A673 (cell line): ENCODE measurements at regions of chr5 and their contacts with region 1.

Region 1: GRCh38 chr5:93006915-93007314 is 574.1 kb downstream of the NR2F1-AS1 start:
- DNase-seq: no peak
- H3K4me3 ChIP-seq: no peak overlapping the region
- H3K27ac ChIP-seq: no peak overlapping the region
- H3K4me1 ChIP-seq: no peaks in the 10 kb centered on the region
- H3K27me3 ChIP-seq: no peaks in the 10 kb centered on the region
- CTCF ChIP-seq: no peak

Region 2: GRCh38 chr5:92429646-92430045 is 577.3 kb before region 1 on chr5:
- CTCF ChIA-PET with region 1: no interaction called
- POLR2A ChIA-PET with region 1: no interaction called
- intact Hi-C with region 1: no loop called
- DNase-seq: no peak
- H3K4me3 ChIP-seq: no peak overlapping the region
- H3K27ac ChIP-seq: no peak overlapping the region
- H3K4me1 ChIP-seq: no peaks in the 10 kb centered on the region
- H3K27me3 ChIP-seq: no peaks in the 10 kb centered on the region
- CTCF ChIP-seq: no peak

Region 3: DNA sequence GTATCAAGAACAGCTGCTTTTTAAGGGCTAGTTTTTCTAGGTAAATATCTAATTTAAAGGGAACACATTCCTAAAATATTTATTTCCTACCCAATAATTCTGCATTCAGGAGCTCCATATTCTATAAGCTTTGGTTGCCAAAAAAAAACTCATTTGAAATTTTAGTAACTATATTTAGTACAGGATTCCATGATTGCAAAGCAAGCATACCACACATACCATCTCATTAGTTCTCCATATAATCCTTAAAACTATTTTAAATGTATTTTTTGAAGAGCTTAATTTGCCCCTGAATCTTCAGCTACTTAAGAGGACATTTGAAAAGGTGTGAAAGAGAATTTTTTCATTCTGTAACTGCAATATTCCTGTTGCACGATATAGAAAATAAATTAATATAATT is 302.9 kb before region 1 on chr5:
- CTCF ChIA-PET with region 1: no interaction called
- POLR2A ChIA-PET with region 1: interaction called, 11 read pairs
- intact Hi-C with region 1: no loop called
- DNase-seq: no peak
- H3K4me3 ChIP-seq: no peak overlapping the region
- H3K27ac ChIP-seq: no peak overlapping the region
- H3K4me1 ChIP-seq: peaks cover 19% of the 10 kb centered on the region
- H3K27me3 ChIP-seq: peaks cover 82% of the 10 kb centered on the region
- CTCF ChIP-seq: no peak

Region 4: DNA sequence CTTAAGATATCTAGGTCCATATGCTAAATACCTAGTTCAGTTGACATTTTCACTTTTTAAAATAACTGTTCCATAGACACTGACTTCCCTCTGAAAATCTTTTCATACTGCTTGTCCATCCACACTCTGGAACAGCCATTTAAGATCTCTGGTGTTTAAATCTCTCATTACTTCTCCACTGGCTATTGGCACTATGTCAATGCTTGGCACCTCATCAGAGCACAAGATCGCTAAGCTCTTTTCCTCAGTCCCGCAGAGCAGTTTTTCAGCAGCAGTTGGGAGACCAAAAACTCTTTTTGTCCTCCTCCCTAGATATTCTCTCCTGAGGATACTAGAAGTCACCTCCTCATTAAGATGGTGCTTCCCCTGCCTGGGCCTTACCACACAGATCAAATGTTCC is 1438.8 kb after region 1 on chr5:
- CTCF ChIA-PET with region 1: no interaction called
- POLR2A ChIA-PET with region 1: no interaction called
- intact Hi-C with region 1: no loop called
- DNase-seq: no peak
- H3K4me3 ChIP-seq: no peak overlapping the region
- H3K27ac ChIP-seq: no peak overlapping the region
- H3K4me1 ChIP-seq: no peaks in the 10 kb centered on the region
- H3K27me3 ChIP-seq: no peaks in the 10 kb centered on the region
- CTCF ChIP-seq: no peak